Posterior vena cava (tissue), 2 donors: ENCODE measurements at regions of chr4 and their contacts with region 1.

Region 1: DNA sequence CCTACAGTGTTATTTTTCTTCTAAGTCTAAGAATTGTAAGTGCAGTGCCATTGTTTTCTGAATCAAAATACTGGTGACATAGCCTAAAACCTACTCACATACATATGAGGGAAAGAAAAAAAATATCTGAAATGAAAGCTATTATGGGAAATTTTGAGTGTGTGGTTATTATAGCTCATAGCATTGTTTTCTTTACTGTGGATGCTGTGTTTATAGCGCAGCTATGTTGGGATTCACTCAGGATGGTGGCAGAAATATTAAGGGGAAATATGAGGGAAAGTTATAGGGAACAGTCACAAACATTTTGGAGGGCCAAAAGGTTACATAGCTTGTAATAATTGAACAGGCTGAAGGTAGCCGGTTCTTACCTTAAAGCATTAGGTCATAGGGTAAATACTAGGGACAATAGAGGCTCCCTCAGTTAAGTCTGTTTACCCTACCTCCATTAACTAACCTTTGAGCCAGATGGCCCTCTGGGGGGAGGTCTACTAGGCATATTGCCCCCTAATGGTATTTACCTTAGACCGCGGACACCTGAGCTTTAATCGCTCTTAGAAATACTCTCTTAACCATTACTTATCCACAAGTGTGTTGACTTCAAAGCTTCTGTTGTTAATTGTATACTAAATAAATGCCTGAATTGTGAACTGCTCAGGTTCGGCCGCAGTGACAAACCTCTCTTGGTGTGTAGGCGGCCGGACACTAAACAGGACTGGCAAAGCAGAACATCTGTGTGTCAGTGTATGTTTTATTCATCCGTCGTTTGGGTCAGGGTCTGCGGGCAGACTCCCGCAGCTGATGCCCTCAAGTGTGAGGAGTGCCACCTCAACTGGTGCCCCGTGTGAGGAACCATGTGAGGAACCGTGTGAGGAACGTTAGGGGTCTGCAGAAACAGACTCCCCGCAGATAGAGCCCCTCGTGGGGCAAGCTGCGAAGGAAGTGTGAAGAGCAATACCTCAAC is 21.3 kb upstream of the SULT1B1 start:
- DNase-seq: peak; percentile 74

Region 2: DNA sequence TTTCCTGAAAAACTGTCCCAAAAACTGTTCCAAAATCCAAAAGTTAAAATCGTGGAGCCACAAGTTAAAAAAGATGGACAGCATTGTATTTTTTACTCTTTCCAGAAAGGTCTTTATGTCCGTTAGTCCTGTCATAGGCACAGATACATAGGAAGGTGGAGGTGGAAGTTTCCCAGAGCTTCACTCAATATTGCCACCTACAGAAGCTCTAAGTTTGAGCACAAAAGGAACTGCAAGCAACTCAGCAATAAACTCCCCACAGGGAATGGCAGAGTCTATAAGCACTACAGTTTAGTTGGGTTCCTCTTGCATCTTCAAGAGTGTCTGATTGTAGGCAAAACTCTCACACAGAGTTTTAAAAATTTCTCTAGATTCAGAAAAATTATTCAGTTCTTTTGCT is 264.1 kb before region 1 on chr4:
- intact Hi-C with region 1: no loop called
- DNase-seq: no peak

Region 3: GRCh38 chr4:69743476-69744156 is 38.1 kb before region 1 on chr4:
- intact Hi-C with region 1: loop called in 1 of 2 experiments (anchors 2 kb)
- DNase-seq: peak; percentile 71

Region 4: DNA sequence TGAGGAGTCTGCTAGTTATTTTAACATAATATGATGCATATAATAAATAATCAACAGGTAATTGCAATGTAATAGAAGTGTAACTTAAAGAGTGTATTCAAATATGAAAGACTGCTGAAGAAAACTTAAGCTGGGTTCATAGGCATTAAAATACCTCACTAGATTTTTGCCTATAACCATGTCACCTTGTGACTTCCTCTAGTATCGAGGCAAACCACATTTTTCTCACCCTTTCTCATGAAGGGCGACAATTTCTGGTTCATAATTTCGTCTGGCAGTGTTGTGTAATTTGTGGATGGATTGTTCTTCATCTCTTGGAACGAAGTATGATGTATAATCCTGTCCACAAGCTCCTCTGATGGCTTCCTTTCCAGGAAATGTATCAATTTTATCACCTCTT is 62.2 kb after region 1 on chr4:
- intact Hi-C with region 1: no loop called
- DNase-seq: no peak

Region 5: DNA sequence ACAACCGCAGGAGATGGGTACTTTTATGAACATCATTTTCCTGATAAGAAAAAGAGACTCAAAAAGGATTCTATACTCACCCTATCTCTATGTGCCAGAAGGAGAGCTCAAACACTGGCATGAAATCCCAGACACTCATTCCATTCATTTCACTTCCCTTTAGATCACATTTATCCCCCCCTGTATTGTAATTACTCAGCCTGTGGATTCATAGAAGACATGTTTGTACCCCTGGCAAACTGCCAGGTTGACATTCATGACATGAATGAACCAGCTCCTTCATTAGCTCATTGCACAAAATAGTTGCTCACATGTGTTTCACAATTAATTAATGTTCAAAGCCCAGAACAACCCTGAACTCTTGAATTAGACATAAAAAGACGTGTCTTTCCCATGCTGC is 583.7 kb after region 1 on chr4:
- intact Hi-C with region 1: no loop called
- DNase-seq: no peak